Left cardiac atrium (tissue), 4 donors: ENCODE measurements at regions of chr9 and their contacts with region 1.

Region 1: GRCh38 chr9:110188991-110189390 is 19.0 kb downstream of the C9orf152 start:
- DNase-seq: no peak
- ATAC-seq: peak; percentile 45 to 64

Region 2: DNA sequence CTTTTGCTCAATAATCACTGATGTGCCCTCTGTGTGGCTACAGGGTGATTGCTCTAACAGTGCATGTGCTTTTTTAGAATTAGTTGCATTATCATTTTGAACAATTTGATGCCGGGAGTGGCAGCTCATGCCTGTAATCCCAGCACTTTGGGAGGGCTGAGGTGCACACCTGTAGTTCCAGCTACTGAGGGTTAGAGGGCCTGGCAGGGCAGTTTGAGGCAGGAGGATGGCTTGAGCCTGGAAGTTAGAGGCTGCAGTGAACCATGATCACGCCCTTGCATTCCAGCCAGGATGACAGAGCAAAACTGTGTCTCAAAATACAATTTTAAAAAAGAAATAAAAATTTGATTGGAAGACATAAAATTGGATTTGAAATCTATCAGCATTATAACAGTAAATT is 40.0 kb after region 1 on chr9:
- intact Hi-C with region 1: no loop called
- DNase-seq: no peak
- ATAC-seq: no peak

Region 3: GRCh38 chr9:110545705-110546104 is 356.7 kb after region 1 on chr9:
- intact Hi-C with region 1: loop called in 1 of 2 experiments (anchors 5 kb)
- DNase-seq: no peak
- ATAC-seq: peak in 1 of 2 donors; percentile 82

Region 4: GRCh38 chr9:110623462-110624025 is 434.6 kb after region 1 on chr9:
- intact Hi-C with region 1: loop called in 1 of 2 experiments (anchors 5 kb)
- DNase-seq: no peak
- ATAC-seq: peak in 1 of 2 donors; percentile 24